GM18951 (cell line): ENCODE measurements at regions of chr1 and their contacts with region 1.

Region 1: DNA sequence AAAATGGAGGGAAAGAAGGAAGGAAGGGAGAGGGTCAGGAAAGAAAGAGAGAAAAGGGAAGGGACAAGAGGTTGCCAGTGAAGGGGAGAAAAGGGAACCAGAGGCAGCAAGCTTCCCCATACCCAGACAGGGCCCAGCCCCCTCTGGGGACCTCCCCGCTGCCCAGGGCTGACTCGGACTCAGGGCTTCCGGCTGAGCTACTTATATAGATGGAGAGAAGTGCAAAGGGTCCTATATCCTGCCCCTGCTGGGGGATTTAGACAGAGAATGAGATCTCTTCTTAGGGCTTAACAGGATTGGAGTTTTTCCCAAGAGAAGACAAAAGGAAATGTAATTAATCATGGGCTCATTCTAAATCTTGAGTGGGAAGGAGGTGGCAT is at the start of gene ETV3L:
- POLR2A ChIP-seq: no peak

Region 2: GRCh38 chr1:157147906-157148717 is 48.5 kb after region 1 on chr1:
- in situ Hi-C with region 1: loop called (anchors 5 kb)
- POLR2A ChIP-seq: no peak